ENCODE measurements at regions of chr13 and their contacts with region 1.

Region 1: DNA sequence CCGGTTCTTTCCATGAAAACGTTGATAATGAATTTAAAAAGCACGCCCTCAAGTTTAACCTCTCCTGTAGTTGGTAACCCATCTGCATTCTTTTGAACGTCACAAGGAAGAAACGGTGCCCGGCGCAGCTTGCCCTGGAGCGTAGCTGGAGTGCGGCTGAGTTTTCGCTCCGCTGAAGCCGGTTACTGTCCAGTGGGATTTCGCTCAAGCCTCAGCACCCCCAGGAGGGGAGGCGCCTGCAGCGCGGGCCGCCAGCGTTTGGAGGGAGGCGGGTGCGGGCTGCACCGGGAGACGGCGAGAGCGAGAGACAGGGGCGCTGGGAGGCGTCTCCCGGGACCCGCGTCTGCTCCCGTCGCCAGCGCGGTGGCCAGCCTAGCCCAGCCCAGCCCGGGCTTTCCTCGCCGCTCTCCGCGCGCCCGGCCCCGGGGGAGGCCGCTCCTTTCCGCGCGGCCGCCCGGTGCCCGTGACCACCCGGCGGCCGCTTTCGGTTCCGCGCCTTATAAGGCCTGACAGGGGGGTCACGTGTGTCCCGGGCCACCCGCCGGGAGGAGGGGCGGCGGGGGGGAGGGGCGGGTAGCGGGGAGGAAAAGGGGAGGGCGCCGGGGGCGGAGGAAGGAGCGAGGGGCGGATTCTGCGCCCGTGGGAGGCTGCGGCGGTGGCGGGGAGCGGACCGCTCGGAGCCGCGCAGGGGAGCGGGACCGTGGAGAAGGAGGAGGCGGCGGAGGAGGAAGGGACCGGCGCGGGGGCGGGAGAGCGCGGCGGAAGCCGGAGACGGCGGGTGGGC is 8.3 kb upstream of the DGKH start:
- DNase-seq: peak; percentile 88 to 90
- H3K4me3 ChIP-seq: peak overlapping the region; percentile 58
- H3K4me3 Mint-ChIP-seq: peak overlapping the region; percentile 88
- H3K27ac Mint-ChIP-seq: peak overlapping the region; percentile 32
- H3K4me1 ChIP-seq: peaks cover 10% of the 10 kb centered on the region; the same call in 1 of the 2 replicates
- H3K4me1 Mint-ChIP-seq: peaks cover 17% of the 10 kb centered on the region
- H3K27me3 ChIP-seq: no peaks in the 10 kb centered on the region; the same call in 1 of the 2 replicates
- H3K27me3 Mint-ChIP-seq: peaks cover 37% of the 10 kb centered on the region
- CTCF ChIP-seq: peak in 1 of 2 experiments; percentile 9

Region 2: DNA sequence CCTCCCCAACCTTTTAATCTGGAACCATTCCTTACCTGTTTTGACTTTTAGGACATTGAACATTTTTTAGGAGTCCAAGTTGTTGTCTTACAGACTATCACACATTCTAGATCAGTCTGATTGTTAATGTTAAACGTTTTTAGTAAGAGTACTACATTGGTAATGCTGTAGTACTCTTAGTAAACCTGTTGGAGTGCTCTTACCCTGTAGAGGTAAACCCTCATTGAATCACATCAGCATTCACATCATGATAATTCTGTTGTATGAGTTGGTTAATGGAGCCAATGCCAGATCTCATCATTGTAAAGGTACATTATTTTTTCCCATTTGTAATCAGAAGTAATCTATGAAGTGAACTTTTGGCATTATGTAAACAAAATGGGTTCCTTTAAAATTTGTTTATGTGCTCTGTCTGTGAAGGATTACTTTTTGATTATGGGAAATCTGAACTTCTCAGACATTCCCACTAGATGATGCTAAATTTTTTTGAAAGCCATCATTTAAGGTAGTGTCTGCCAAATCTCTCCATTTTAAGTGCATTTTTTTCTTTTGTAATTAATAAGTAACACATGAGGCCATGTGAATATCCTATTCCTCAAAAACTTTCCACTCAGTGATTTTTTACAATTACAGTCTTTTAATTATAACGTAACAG is 134.4 kb before region 1 on chr13:
- CTCF ChIA-PET with region 1: no interaction called
- POLR2A ChIA-PET with region 1: no interaction called
- intact Hi-C with region 1: loop called (anchors 1 kb)
- DNase-seq: peak in 1 of 2 experiments; percentile 31
- H3K4me3 ChIP-seq: no peak overlapping the region
- H3K4me3 Mint-ChIP-seq: no peak overlapping the region
- H3K27ac Mint-ChIP-seq: no peak overlapping the region
- H3K4me1 ChIP-seq: no peaks in the 10 kb centered on the region
- H3K4me1 Mint-ChIP-seq: no peaks in the 10 kb centered on the region
- H3K27me3 ChIP-seq: no peaks in the 10 kb centered on the region
- H3K27me3 Mint-ChIP-seq: no peaks in the 10 kb centered on the region
- CTCF ChIP-seq: peak; percentile 65 to 79

Region 3: DNA sequence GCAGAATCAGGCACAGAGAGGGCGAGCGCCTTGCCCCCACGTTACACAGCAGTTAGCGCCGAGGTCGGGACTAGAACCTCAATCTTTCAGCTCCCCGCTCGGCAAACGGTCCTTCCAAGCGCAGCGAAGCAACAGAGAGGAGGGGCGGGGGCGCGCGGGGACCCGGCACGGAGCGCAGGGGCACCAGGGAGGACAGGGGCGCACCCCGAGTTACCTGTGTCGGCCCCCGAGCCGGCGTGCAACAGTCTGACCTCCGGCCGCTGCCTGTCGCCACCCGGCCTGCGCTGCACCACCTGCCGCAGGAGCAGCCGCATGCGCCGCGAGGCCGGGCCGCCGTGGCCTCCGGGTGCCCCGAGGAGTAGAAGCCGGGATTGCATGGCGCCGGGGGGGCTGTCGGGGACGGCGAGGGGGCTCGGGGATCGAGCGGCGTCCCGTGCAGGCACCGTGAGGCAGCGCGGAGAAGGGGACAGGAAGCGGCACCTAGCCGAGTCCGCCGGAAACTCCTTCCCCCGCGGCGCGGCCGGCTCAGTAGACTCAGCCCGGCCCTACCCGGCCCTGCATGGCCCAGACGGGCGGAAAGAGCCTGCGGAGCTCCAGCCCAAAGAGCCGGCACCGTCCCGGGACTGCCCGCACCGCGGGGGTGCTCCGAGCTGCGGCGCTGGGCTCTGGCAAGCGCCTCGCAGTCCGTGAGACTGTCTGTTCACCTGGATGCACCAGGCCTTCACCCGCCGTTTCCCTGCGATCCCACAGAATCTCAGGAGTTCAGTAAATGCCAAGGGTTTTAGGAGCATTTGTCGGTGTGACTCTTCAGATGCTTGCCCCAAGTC is 79.3 kb before region 1 on chr13 and contains the start of gene VWA8:
- CTCF ChIA-PET with region 1: no interaction called
- POLR2A ChIA-PET with region 1: no interaction called
- intact Hi-C with region 1: loop called (anchors 5 kb)
- DNase-seq: peak; percentile 85 to 90
- H3K4me3 ChIP-seq: peak within 1 kb of the TSS; percentile 78
- H3K4me3 Mint-ChIP-seq: peak within 1 kb of the TSS; percentile 88
- H3K27ac Mint-ChIP-seq: peak within 1 kb of the TSS; percentile 84
- H3K4me1 ChIP-seq: peaks cover 11% of the 10 kb centered on the region; the same call in 1 of the 2 replicates
- H3K4me1 Mint-ChIP-seq: peaks cover 14% of the 10 kb centered on the region
- H3K27me3 ChIP-seq: no peaks in the 10 kb centered on the region
- H3K27me3 Mint-ChIP-seq: no peaks in the 10 kb centered on the region
- CTCF ChIP-seq: no peak
- total RNA-seq, gene VWA8: 20.7 and 20.9 TPM in 2 replicates

Region 4: GRCh38 chr13:42028113-42028799 is 11.9 kb before region 1 on chr13:
- CTCF ChIA-PET with region 1: no interaction called
- POLR2A ChIA-PET with region 1: interaction called, 3 read pairs
- intact Hi-C with region 1: loop called (anchors 1 kb)
- DNase-seq: peak; percentile 71 to 74
- H3K4me3 ChIP-seq: no peak overlapping the region
- H3K4me3 Mint-ChIP-seq: peak overlapping the region; percentile 8
- H3K27ac Mint-ChIP-seq: peak overlapping the region; percentile 70
- H3K4me1 ChIP-seq: peaks cover 19% of the 10 kb centered on the region
- H3K4me1 Mint-ChIP-seq: peaks cover 18% of the 10 kb centered on the region
- H3K27me3 ChIP-seq: no peaks in the 10 kb centered on the region
- H3K27me3 Mint-ChIP-seq: no peaks in the 10 kb centered on the region
- CTCF ChIP-seq: no peak

Region 5: GRCh38 chr13:42064259-42064658 is 24.1 kb after region 1 on chr13:
- CTCF ChIA-PET with region 1: no interaction called
- POLR2A ChIA-PET with region 1: no interaction called
- intact Hi-C with region 1: no loop called
- DNase-seq: no peak
- H3K4me3 ChIP-seq: no peak overlapping the region
- H3K4me3 Mint-ChIP-seq: no peak overlapping the region
- H3K27ac Mint-ChIP-seq: no peak overlapping the region
- H3K4me1 ChIP-seq: no peaks in the 10 kb centered on the region
- H3K4me1 Mint-ChIP-seq: peaks cover 7% of the 10 kb centered on the region
- H3K27me3 ChIP-seq: no peaks in the 10 kb centered on the region
- H3K27me3 Mint-ChIP-seq: no peaks in the 10 kb centered on the region
- CTCF ChIP-seq: no peak

Region 6: GRCh38 chr13:42078128-42078808 is 38.1 kb after region 1 on chr13:
- CTCF ChIA-PET with region 1: no interaction called
- POLR2A ChIA-PET with region 1: no interaction called
- intact Hi-C with region 1: no loop called
- DNase-seq: peak in 1 of 2 experiments; percentile 19
- H3K4me3 ChIP-seq: no peak overlapping the region
- H3K4me3 Mint-ChIP-seq: no peak overlapping the region
- H3K27ac Mint-ChIP-seq: no peak overlapping the region
- H3K4me1 ChIP-seq: no peaks in the 10 kb centered on the region
- H3K4me1 Mint-ChIP-seq: no peaks in the 10 kb centered on the region
- H3K27me3 ChIP-seq: no peaks in the 10 kb centered on the region
- H3K27me3 Mint-ChIP-seq: peaks cover 3% of the 10 kb centered on the region
- CTCF ChIP-seq: no peak

Region 7: GRCh38 chr13:42215578-42216421 is 175.7 kb after region 1 on chr13:
- CTCF ChIA-PET with region 1: no interaction called
- POLR2A ChIA-PET with region 1: no interaction called
- intact Hi-C with region 1: loop called (anchors 10 kb)
- DNase-seq: peak; percentile 45 to 55
- H3K4me3 ChIP-seq: no peak overlapping the region
- H3K4me3 Mint-ChIP-seq: no peak overlapping the region
- H3K27ac Mint-ChIP-seq: no peak overlapping the region
- H3K4me1 ChIP-seq: no peaks in the 10 kb centered on the region
- H3K4me1 Mint-ChIP-seq: peaks cover 6% of the 10 kb centered on the region
- H3K27me3 ChIP-seq: no peaks in the 10 kb centered on the region
- H3K27me3 Mint-ChIP-seq: no peaks in the 10 kb centered on the region
- CTCF ChIP-seq: peak; percentile 41 to 65

Measured in Caco-2 (cell line).